ENCODE measurements at regions of chr18 and their contacts with region 1.

Region 1: DNA sequence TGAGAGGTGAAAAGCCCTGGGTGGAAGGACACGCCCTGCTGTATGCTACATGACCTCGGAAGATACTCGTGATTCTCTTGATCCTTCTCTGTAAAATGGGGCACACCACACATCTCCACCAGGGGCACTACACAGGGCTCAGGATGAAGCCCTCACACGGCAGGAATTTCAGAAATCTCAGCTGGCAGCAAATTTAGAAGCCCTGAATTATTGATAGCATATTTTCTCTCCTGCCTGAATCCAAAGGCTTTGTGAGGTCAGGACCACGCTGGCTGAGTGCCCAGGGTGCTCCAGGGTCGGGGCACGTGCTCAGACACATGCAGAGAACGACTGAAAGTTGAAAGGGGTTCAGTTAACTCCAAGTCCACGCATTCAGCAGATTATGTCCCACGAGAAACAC is 42.1 kb upstream of the GALR1 start:
- DNase-seq: peak; percentile 42
- H3K4me3 ChIP-seq: no peak overlapping the region
- H3K27ac ChIP-seq: no peak overlapping the region
- H3K4me1 ChIP-seq: no peaks in the 10 kb centered on the region
- H3K27me3 ChIP-seq: no peaks in the 10 kb centered on the region
- CTCF ChIP-seq: peak; percentile 67 to 78

Region 2: DNA sequence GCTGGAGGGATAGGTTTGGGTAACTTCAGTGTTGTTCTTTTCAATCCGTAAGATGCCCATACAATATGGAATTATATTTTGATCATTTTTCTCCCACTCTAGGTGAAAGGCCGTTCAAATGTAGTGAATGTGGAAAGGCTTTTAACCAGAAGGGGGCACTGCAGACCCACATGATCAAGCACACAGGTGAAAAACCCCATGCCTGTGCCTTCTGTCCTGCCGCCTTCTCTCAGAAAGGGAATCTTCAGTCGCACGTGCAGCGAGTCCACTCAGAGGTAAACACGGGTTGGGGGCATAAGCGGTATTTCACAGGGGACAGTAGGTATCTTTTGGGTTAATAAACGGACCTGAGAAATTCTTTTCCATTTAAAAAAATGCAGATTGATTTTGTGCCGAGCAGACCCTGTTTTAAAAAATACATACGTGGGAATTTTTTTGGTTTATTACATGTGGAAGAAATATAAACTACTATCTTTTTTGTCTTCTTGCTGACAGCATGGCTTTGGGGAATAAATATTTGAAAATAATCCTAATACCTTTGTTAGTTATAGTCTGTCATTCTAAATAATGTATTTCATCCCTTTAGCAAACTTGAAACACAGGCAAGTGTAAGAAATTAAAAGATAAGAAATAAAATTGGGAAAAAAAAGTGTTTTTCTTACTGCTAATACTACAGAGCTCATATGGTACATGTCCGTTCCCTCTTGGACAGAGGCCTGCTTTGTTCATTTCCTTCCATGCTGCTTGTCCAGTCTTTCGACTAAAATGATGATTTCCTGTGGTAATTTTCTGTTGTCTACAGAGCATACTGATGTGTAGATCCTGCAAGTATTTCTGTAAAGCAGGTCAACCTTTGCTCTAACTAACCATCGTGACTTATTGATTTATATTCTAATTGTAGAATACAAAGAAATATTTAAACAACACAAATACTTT is 331.9 kb before region 1 on chr18:
- CTCF ChIA-PET with region 1: no interaction called
- dilution Hi-C with region 1: no loop called
- in situ Hi-C with region 1: no loop called
- intact Hi-C with region 1: loop called (anchors 1 kb)
- DNase-seq: peak; percentile 20
- H3K4me3 ChIP-seq: no peak overlapping the region
- H3K27ac ChIP-seq: no peak overlapping the region
- H3K4me1 ChIP-seq: no peaks in the 10 kb centered on the region
- H3K27me3 ChIP-seq: no peaks in the 10 kb centered on the region
- CTCF ChIP-seq: peak; percentile 60 to 64

Region 3: GRCh38 chr18:77000527-77000926 is 207.0 kb before region 1 on chr18:
- CTCF ChIA-PET with region 1: interaction called, 9 read pairs
- dilution Hi-C with region 1: no loop called
- in situ Hi-C with region 1: loop called (anchors 5 to 25 kb)
- intact Hi-C with region 1: loop called (anchors 1 kb)
- DNase-seq: peak; percentile 17
- H3K4me3 ChIP-seq: no peak overlapping the region
- H3K27ac ChIP-seq: no peak overlapping the region
- H3K4me1 ChIP-seq: no peaks in the 10 kb centered on the region
- H3K27me3 ChIP-seq: no peaks in the 10 kb centered on the region
- CTCF ChIP-seq: peak; percentile 95 to 97

Region 4: GRCh38 chr18:77054606-77055428 is 152.7 kb before region 1 on chr18:
- CTCF ChIA-PET with region 1: interaction called, 3 read pairs
- dilution Hi-C with region 1: no loop called
- in situ Hi-C with region 1: no loop called
- intact Hi-C with region 1: loop called (anchors 1 kb)
- DNase-seq: no peak
- H3K4me3 ChIP-seq: no peak overlapping the region
- H3K27ac ChIP-seq: no peak overlapping the region
- H3K4me1 ChIP-seq: no peaks in the 10 kb centered on the region
- H3K27me3 ChIP-seq: no peaks in the 10 kb centered on the region
- CTCF ChIP-seq: peak; percentile 23 to 54

Region 5: GRCh38 chr18:77068321-77069312 is 138.9 kb before region 1 on chr18:
- CTCF ChIA-PET with region 1: no interaction called
- dilution Hi-C with region 1: no loop called
- in situ Hi-C with region 1: no loop called
- intact Hi-C with region 1: no loop called
- DNase-seq: peak; percentile 65
- H3K4me3 ChIP-seq: no peak overlapping the region
- H3K27ac ChIP-seq: peak overlapping the region; percentile 81
- H3K4me1 ChIP-seq: peaks cover 67% of the 10 kb centered on the region
- H3K27me3 ChIP-seq: no peaks in the 10 kb centered on the region
- CTCF ChIP-seq: no peak

Region 6: GRCh38 chr18:77597726-77598125 is 390.2 kb after region 1 on chr18:
- CTCF ChIA-PET with region 1: no interaction called
- dilution Hi-C with region 1: no loop called
- in situ Hi-C with region 1: no loop called
- intact Hi-C with region 1: no loop called
- DNase-seq: no peak
- H3K4me3 ChIP-seq: no peak overlapping the region
- H3K27ac ChIP-seq: no peak overlapping the region
- H3K4me1 ChIP-seq: no peaks in the 10 kb centered on the region
- H3K27me3 ChIP-seq: no peaks in the 10 kb centered on the region
- CTCF ChIP-seq: no peak